Gastrocnemius medialis (tissue), 4 donors: ENCODE measurements at regions of chr6 and their contacts with region 1.

Region 1: DNA sequence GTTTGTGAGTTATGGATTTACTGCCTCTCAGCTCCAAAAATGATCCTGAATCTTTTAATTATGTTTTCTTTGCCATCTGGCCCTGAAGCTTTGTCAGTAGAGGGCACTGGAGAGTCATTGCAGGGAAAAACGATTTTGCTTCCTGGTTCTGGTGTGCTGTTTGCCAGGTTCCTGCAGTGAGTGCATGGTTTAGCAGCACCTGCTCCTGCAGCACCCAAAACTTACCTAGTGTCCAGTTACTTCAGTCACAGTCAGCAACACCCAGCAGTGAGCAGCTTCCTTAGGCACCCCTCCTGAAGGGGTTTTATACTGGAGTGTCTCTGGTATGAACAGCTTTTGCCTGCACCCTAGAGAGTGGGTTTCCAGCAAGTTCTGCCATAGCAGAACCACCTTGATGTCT is 6.0 kb upstream of the TRIM26 start:
- DNase-seq: no peak
- ATAC-seq: no peak
- H3K4me3 ChIP-seq: no peak overlapping the region
- H3K27ac ChIP-seq: no peak overlapping the region
- H3K4me1 ChIP-seq: peaks cover 0 to 4% of the 10 kb centered on the region in 2 donors
- H3K27me3 ChIP-seq: no peaks in the 10 kb centered on the region
- CTCF ChIP-seq: peak; percentile 18 to 77 (median 43)
- POLR2A ChIP-seq: no peak

Region 2: DNA sequence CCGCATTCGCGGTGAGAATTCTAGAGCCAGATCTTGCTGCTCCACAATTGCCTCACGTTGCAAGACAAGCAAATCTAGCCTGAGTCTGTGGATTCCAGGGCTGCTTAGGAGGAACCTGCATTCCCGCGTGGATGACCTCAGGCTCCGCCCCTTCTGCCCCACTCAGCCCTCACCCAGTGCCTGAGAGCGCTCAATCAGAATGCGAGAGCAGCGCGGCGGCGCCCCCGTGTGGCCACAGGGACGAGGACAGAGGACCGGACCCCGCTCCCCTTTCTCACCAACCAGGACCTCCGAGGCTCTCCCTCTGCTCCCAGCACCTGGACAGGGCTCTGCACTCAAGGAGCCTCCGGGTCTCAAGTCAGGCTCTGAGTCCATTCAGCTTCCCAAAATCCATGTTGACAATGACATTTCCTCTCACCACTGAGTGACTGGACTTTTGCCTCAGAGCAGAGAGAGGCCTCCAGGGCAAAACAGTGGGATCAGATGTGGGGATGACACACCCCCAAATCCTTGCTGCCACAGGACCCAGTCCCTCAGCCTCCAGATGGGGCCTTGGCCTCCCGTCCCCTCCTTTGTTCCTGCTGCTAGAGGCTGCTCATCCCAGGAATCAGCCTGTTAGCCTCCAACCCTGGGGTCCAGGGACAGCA is 177.7 kb after region 1 on chr6:
- in situ Hi-C with region 1: no loop called
- intact Hi-C with region 1: loop called (anchors 5 kb)
- DNase-seq: peak; percentile 22 to 48
- ATAC-seq: peak in 1 of 2 donors; percentile 82
- H3K4me3 ChIP-seq: no peak overlapping the region
- H3K27ac ChIP-seq: no peak overlapping the region
- H3K4me1 ChIP-seq: no peaks in the 10 kb centered on the region
- H3K27me3 ChIP-seq: peaks cover 0 to 13% (median 7%) of the 10 kb centered on the region in 3 donors
- CTCF ChIP-seq: peak; percentile 43 to 80 (median 64)
- POLR2A ChIP-seq: no peak